ENCODE measurements at regions of chr1 and their contacts with region 1.

Region 1: GRCh38 chr1:248798791-248799190 is 26.9 kb downstream of the SH3BP5L start:
- DNase-seq: no peak
- H3K4me3 Mint-ChIP-seq: no peak overlapping the region
- H3K27ac Mint-ChIP-seq: no peak overlapping the region
- H3K4me1 Mint-ChIP-seq: no peaks in the 10 kb centered on the region
- H3K27me3 Mint-ChIP-seq: peaks cover 5% of the 10 kb centered on the region

Region 2: DNA sequence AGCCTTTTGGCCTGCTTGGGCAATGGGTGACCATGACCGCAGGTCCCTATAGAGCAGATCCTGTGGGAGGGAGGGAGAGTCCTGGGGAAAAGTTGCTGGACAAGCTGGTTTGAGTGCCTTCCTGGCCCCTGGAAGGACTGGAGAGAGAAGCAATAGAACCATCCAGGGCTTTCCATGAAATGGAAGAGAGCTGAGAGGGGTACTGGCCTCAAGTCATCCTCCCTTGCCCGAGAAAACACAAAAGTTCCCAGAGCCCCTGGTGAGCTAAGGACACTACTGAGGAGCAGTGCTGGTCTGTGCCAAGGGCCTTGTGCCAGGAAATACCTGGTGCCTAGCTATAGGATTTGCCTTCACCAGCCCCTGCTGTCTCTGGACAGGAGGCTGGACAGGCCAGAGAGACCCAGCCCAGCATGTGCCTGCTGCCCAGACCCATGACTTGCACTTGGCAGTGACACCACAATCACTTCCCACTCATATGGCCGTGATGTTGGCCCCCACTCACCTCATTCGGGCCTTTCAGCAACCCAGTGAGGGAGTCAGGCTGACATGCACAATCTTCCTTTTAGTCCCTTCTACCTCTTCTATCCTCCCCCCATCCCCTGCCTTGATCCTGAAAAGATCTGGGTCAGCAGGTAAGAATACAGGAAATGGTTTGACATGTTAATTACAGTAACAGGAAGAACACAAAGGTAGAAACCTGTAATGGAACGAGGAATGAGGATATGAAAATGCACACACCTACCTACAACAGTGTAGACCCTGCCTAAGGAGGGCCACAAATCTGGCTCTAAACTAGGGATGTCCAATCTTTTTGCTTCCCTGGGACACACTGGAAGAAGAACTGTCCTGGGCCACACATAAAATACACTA is 19.9 kb after region 1 on chr1:
- CTCF ChIA-PET with region 1: no interaction called
- intact Hi-C with region 1: loop called (anchors 2 kb)
- DNase-seq: peak; percentile 24
- H3K4me3 Mint-ChIP-seq: peak overlapping the region; percentile 7
- H3K27ac Mint-ChIP-seq: peak overlapping the region; percentile 59
- H3K4me1 Mint-ChIP-seq: peaks cover 76% of the 10 kb centered on the region
- H3K27me3 Mint-ChIP-seq: no peaks in the 10 kb centered on the region